ENCODE measurements at regions of chr3 and their contacts with region 1.

Region 1: GRCh38 chr3:38460377-38461270 is 6.9 kb downstream of the ACVR2B start:
- DNase-seq: no peak
- ATAC-seq: no peak
- H3K4me3 ChIP-seq: no peak overlapping the region
- H3K27ac ChIP-seq: no peak overlapping the region
- H3K4me1 ChIP-seq: peaks cover 17% of the 10 kb centered on the region; the same call in 1 of the 2 replicates
- H3K27me3 ChIP-seq: no peaks in the 10 kb centered on the region
- CTCF ChIP-seq: no peak

Region 2: GRCh38 chr3:38536686-38537085 is 76.1 kb after region 1 on chr3:
- CTCF ChIA-PET with region 1: no interaction called
- POLR2A ChIA-PET with region 1: no interaction called
- intact Hi-C with region 1: loop called (anchors 2 kb)
- DNase-seq: no peak
- ATAC-seq: no peak
- H3K4me3 ChIP-seq: no peak overlapping the region
- H3K27ac ChIP-seq: no peak overlapping the region
- H3K4me1 ChIP-seq: no peaks in the 10 kb centered on the region
- H3K27me3 ChIP-seq: no peaks in the 10 kb centered on the region
- CTCF ChIP-seq: no peak